ENCODE measurements at regions of chr12 and their contacts with region 1.

Region 1: DNA sequence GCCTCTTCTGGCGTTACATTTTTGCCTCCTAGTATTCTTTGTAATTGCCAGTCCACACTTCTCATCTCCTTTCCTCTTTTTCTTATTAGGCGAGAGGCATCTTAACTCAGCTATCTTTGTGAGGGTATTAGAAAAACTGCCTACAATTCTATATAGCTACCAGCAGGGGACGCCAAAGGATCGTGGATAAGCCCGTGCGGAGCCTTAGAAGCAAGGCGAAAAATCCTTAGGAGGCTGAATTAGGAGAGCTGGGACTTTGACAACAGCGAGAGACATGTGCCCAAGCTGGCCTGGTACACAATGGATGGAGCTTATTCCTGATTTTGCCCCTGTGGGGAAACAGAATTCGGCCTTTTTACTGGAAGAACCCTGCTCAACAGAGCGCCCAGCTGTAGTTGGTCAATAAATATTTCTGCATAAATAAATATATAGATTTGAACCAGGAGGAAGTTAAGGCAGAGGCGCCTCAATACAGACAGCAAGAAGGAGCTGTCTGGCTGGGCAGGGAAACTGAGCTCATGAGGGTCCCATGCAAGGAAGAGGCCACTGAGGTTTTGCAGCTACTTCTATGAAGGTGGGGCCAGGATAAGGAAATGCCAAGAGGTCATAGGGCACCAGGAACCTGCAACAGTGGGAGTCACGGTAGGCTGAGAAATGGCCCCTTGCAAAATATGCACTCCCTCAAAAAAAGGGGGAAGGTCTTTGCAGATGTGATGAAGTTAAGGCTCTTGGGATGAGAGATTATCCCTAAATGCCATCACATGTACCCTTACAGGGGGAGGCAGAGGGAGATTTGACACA is 14.6 kb upstream of the RBM19 start:
- DNase-seq: peak; percentile 43
- H3K4me3 Mint-ChIP-seq: no peak overlapping the region
- H3K27ac Mint-ChIP-seq: no peak overlapping the region
- H3K4me1 Mint-ChIP-seq: no peaks in the 10 kb centered on the region
- H3K27me3 Mint-ChIP-seq: peaks cover 17% of the 10 kb centered on the region

Region 2: DNA sequence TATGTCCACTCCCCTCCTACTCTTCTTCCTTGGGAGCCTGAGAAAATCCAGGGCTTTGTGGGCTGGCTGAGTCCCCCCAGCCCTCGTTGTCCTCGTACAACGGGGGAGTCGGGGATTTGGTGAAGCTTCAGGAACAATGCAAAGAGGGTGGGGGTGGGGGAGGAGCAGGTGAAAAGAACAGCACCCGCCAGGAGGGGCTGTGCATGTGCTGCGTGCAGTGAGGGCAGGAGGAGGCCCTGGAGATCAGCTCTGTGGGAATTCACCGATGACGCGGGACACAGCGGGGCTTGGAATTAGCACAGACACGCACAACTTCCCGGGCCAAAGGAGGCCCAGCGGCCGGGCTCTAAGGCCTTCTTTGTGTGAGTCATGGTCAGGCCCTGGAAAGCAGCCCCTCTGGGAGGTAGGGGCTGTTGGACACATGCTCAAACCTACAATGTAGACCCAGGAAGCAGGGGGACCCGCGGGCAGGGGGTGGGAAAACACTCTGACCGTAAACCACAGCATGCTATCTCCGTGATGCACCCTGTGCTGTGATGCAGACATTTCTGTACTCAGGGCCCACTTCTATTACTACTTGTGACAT is 47.4 kb before region 1 on chr12:
- CTCF ChIA-PET with region 1: no interaction called
- POLR2A ChIA-PET with region 1: no interaction called
- intact Hi-C with region 1: no loop called
- DNase-seq: no peak
- H3K4me3 Mint-ChIP-seq: no peak overlapping the region
- H3K27ac Mint-ChIP-seq: no peak overlapping the region
- H3K4me1 Mint-ChIP-seq: peaks cover 8% of the 10 kb centered on the region
- H3K27me3 Mint-ChIP-seq: no peaks in the 10 kb centered on the region

Region 3: DNA sequence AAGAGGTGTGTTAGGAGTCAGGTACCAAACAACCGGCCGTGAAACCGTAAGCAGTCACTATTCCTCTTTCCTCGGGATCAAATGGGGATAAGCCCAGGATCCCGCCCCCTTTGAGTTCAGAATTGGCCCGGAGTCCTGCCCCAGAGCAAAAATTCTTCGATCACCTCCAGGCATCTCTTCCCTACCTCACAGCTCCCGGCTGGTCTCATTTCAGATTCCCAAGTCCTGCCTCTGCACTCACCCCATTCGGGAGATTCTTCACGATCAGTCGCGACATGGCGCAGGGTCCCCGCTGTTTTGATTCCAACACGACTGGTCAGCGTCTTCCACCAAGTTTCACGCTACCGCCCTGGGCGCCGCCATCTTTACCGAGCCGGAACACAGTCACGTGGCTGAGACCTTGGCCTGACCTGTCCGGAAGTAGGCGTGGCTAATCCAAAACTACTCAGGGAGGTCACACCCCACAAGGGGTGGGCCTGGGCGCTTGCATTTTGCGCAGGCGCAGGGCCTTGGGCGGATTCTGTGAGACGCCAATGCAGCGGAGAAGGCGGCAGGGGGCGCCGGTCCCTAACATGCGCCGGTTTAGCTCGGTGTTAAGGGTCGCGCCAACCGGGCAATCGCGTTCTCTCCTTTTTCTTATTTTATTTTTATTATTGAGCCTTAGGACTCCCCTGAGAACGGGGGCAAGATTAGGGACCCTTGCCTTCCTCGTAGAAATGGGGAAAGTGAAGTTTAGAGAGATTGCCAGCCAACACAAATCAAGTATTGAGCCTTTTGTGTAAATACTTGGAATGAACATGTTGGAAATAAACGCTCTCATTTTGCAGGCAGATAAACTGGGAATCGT is 14.6 kb before region 1 on chr12 and contains the start of gene RBM19:
- CTCF ChIA-PET with region 1: interaction called, 18 read pairs
- POLR2A ChIA-PET with region 1: no interaction called
- intact Hi-C with region 1: no loop called
- DNase-seq: peak; percentile 98
- H3K4me3 Mint-ChIP-seq: peak within 1 kb of the TSS; percentile 100
- H3K27ac Mint-ChIP-seq: peak within 1 kb of the TSS; percentile 92
- H3K4me1 Mint-ChIP-seq: peaks cover 53% of the 10 kb centered on the region
- H3K27me3 Mint-ChIP-seq: no peaks in the 10 kb centered on the region
- total RNA-seq, gene RBM19: 69.6 to 74.1 TPM

Region 4: DNA sequence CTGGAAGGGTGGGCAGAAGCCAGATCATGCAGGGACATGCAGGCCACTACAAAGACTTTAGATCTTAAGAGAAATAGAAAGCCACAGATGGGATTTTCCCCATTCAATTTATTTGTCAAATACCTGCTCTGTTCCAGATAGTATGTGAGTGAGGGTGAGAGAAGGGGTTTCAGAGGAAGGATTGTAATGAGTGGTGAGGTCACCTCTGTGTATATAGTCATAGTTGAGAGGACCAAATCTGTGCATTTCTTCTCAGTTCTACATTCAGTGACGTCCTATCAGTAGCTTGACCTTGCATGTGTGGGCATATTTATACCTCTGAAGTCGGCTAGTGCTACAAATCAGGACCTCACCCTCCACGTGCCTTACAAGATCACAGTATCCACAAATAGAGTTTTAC is 16.6 kb after region 1 on chr12:
- CTCF ChIA-PET with region 1: interaction called, 12 read pairs
- POLR2A ChIA-PET with region 1: no interaction called
- intact Hi-C with region 1: no loop called
- DNase-seq: no peak
- H3K4me3 Mint-ChIP-seq: no peak overlapping the region
- H3K27ac Mint-ChIP-seq: no peak overlapping the region
- H3K4me1 Mint-ChIP-seq: no peaks in the 10 kb centered on the region
- H3K27me3 Mint-ChIP-seq: peaks cover 10% of the 10 kb centered on the region

Region 5: GRCh38 chr12:114508529-114509129 is 527.9 kb after region 1 on chr12:
- CTCF ChIA-PET with region 1: interaction called, 58 read pairs
- POLR2A ChIA-PET with region 1: no interaction called
- intact Hi-C with region 1: loop called (anchors 1 kb)
- DNase-seq: peak; percentile 71
- H3K4me3 Mint-ChIP-seq: no peak overlapping the region
- H3K27ac Mint-ChIP-seq: no peak overlapping the region
- H3K4me1 Mint-ChIP-seq: peaks cover 2% of the 10 kb centered on the region
- H3K27me3 Mint-ChIP-seq: peaks cover 5% of the 10 kb centered on the region

Region 6: GRCh38 chr12:115916910-115917668 is 1936.4 kb after region 1 on chr12:
- CTCF ChIA-PET with region 1: interaction called, 24 read pairs
- POLR2A ChIA-PET with region 1: no interaction called
- intact Hi-C with region 1: loop called (anchors 2 kb)
- DNase-seq: peak; percentile 78
- H3K4me3 Mint-ChIP-seq: no peak overlapping the region
- H3K27ac Mint-ChIP-seq: no peak overlapping the region
- H3K4me1 Mint-ChIP-seq: no peaks in the 10 kb centered on the region
- H3K27me3 Mint-ChIP-seq: peaks cover 38% of the 10 kb centered on the region